OCI-LY7 (cell line): ENCODE measurements at regions of chr18 and their contacts with region 1.

Region 1: GRCh38 chr18:8969639-8970390 is 132.7 kb upstream of the NDUFV2 start:
- DNase-seq: no peak
- H3K4me3 ChIP-seq: no peak overlapping the region
- H3K27ac ChIP-seq: no peak overlapping the region
- H3K4me1 ChIP-seq: peaks cover 25% of the 10 kb centered on the region
- CTCF ChIP-seq: no peak

Region 2: DNA sequence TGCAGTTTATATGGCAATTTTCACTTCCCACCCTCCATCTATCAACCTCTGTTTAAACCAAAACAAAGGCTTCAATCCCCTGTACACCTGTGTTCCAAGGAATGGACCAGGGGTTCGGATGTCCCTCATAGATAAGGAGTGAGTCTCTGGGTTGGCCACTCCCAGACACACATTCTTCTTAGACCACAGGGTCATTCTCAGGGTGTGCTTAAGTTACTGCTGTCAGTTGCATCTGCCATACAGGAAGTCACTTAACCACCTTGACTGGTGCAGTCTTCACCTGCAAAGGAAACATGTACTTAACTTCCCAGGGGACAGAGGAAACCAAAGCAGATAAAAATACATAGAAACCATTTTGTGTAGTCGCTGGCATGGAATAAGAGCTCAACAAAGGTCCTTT is 18.3 kb before region 1 on chr18:
- CTCF ChIA-PET with region 1: no interaction called
- POLR2A ChIA-PET with region 1: interaction called, 13 read pairs
- intact Hi-C with region 1: no loop called
- DNase-seq: peak; percentile 96
- H3K4me3 ChIP-seq: peak overlapping the region; percentile 38
- H3K27ac ChIP-seq: peak overlapping the region; percentile 91
- H3K4me1 ChIP-seq: peaks cover 72% of the 10 kb centered on the region
- CTCF ChIP-seq: no peak